Heart left ventricle (tissue), 16 donors: ENCODE measurements at regions of chr3 and their contacts with region 1.

Region 1: DNA sequence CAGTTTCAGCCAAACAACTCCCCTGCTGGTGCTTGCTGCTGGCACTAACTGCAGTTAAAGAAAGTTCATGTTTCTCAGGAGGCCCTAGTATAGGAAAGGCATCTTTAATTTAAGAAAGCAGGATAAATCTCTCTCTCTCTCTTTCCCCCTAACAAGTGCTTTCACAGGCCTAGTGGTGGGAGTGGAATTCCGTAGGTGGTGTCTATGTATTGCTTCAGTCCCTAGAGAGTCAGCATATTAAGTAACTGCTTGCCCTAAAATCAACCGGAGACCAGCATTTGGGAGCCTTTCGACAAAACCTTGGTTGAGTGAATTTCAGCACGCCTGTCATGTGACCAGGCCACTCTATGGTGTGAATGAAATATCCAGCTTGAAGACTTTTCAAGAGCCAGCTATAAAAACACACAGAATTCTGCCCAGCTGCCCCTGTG is 169.2 kb upstream of the TGFBR2 start:
- DNase-seq: peak in 4 of 5 donors; percentile 33 to 70 (median 52)
- ATAC-seq: peak in 3 of 4 donors; percentile 48 to 76 (median 74)
- H3K4me3 ChIP-seq: no peak overlapping the region
- H3K27ac ChIP-seq: peak overlapping the region; percentile 19 to 83 (median 55)
- H3K4me1 ChIP-seq: peaks cover 0 to 47% (median 27%) of the 10 kb centered on the region in 12 donors
- H3K27me3 ChIP-seq: no peaks in the 10 kb centered on the region
- CTCF ChIP-seq: peak in 3 of 12 donors; percentile 1 to 24 (median 14)
- POLR2A ChIP-seq: no peak

Region 2: GRCh38 chr3:30426293-30426993 is 10.7 kb before region 1 on chr3:
- intact Hi-C with region 1: loop called in 1 of 10 experiments (anchors 2 kb)
- DNase-seq: peak; percentile 64 to 89 (median 81)
- ATAC-seq: peak; percentile 100
- H3K4me3 ChIP-seq: no peak overlapping the region
- H3K27ac ChIP-seq: peak overlapping the region; percentile 53 to 86 (median 68)
- H3K4me1 ChIP-seq: peaks cover 0 to 24% (median 12%) of the 10 kb centered on the region in 12 donors
- H3K27me3 ChIP-seq: no peaks in the 10 kb centered on the region
- CTCF ChIP-seq: no peak
- POLR2A ChIP-seq: no peak

Region 3: GRCh38 chr3:30518181-30518864 is 81.1 kb after region 1 on chr3:
- intact Hi-C with region 1: loop called in 2 of 10 experiments (anchors 2 to 5 kb)
- DNase-seq: peak in 4 of 5 donors; percentile 26 to 52 (median 36)
- ATAC-seq: peak; percentile 89 to 94 (median 92)
- H3K4me3 ChIP-seq: no peak overlapping the region
- H3K27ac ChIP-seq: peak overlapping the region; percentile 34 to 84 (median 73)
- H3K4me1 ChIP-seq: peaks cover 0 to 45% (median 29%) of the 10 kb centered on the region in 12 donors
- H3K27me3 ChIP-seq: no peaks in the 10 kb centered on the region
- CTCF ChIP-seq: peak in 7 of 12 donors; percentile 9 to 50 (median 26)
- POLR2A ChIP-seq: no peak